Endothelial cell of umbilical vein (primary cell): ENCODE measurements at regions of chr15 and their contacts with region 1.

Region 1: DNA sequence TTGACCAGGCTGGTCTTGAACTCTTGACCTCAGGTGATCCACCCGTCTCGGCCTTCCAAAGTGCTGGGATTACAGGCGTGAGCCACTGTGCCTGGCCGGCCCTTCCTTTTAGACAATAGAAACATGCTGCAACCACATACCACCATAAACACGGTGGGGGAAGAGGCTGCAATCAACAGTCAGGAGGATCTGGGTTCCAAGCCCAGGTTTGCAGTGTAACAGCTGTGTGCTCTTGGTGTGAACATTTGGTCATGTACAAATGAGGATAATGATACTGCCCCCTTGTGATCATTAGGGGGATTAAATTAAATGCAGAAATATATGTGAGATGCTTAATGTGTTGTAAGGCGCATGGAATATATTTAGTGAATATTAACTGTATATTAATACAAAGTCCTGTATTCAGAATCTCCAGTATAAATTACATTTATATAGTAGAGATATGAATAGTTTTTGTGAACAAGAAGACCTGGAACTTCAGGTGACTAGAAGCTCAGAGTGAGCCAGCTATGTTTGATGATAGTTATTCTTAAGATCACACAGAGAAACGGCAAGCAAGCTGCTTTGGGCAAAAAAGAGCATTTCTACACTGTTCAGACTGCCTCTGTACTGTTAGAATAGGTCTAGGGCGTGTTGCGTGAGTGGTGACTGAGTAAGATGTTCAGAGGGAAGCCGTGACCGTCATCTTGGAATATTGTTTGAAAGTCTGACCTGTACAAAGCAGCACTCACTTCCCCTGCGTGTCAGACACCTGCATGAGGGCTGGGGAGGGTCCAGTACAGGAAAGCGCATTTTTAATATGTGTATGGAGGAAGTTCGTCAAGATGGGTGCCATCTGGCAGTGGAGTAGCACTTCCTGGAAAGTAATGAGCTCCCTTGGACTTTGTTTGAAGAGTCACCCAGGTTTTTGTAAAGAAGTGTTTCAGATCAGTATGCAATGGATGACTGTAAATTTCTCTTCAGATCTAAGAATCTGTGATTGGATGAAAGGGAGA is 125.8 kb downstream of the PGPEP1L start:
- DNase-seq: peak; percentile 49
- H3K4me3 ChIP-seq: no peak overlapping the region
- H3K27ac ChIP-seq: no peak overlapping the region
- H3K4me1 ChIP-seq: peaks cover 2% of the 10 kb centered on the region
- H3K27me3 ChIP-seq: no peaks in the 10 kb centered on the region
- CTCF ChIP-seq: peak in 1 of 2 donors; percentile 41
- POLR2A ChIP-seq: no peak

Region 2: GRCh38 chr15:98779463-98780071 is 102.3 kb before region 1 on chr15:
- CTCF ChIA-PET with region 1: interaction called, 21 read pairs
- POLR2A ChIA-PET with region 1: interaction called, 9 read pairs
- dilution Hi-C with region 1: no loop called
- intact Hi-C with region 1: loop called (anchors 1 kb)
- DNase-seq: peak; percentile 77
- H3K4me3 ChIP-seq: no peak overlapping the region
- H3K27ac ChIP-seq: no peak overlapping the region
- H3K4me1 ChIP-seq: peaks cover 5% of the 10 kb centered on the region
- H3K27me3 ChIP-seq: no peaks in the 10 kb centered on the region
- CTCF ChIP-seq: peak; percentile 93 to 95
- POLR2A ChIP-seq: no peak

Region 3: GRCh38 chr15:98865397-98866339 is 16.2 kb before region 1 on chr15:
- CTCF ChIA-PET with region 1: interaction called, 44 read pairs
- POLR2A ChIA-PET with region 1: no interaction called
- dilution Hi-C with region 1: no loop called
- intact Hi-C with region 1: no loop called
- DNase-seq: peak; percentile 68
- H3K4me3 ChIP-seq: peak overlapping the region; percentile 25 to 78 (median 44)
- H3K27ac ChIP-seq: peak overlapping the region; percentile 78
- H3K4me1 ChIP-seq: peaks cover 4% of the 10 kb centered on the region
- H3K27me3 ChIP-seq: no peaks in the 10 kb centered on the region
- CTCF ChIP-seq: no peak
- POLR2A ChIP-seq: peak; percentile 23

Region 4: DNA sequence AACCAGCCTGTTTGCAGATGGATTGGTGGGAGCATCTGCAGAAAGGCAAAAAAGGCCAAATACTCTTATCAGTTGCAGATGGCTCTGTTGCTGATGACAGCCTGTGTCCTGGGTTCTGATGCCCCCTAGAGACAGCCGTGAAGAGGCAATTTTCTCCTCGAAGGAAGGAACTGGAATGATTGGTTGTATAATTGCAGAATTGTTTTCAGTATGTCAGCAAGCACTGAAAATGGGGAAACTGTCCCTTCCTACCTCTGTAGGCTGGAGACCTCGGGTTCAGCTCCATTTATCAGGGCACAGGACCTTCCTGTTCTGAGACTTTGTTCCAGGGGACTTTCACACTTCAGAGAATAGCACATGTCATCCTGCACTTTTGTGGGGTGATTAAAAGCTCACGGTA is 22.7 kb after region 1 on chr15:
- CTCF ChIA-PET with region 1: interaction called, 48 read pairs
- POLR2A ChIA-PET with region 1: no interaction called
- dilution Hi-C with region 1: no loop called
- intact Hi-C with region 1: no loop called
- DNase-seq: peak; percentile 53
- H3K4me3 ChIP-seq: no peak overlapping the region
- H3K27ac ChIP-seq: peak overlapping the region; percentile 15
- H3K4me1 ChIP-seq: peaks cover 42% of the 10 kb centered on the region
- H3K27me3 ChIP-seq: no peaks in the 10 kb centered on the region
- CTCF ChIP-seq: peak; percentile 52 to 58
- POLR2A ChIP-seq: no peak